ENCODE measurements at regions of chr3 and their contacts with region 1.

Region 1: GRCh38 chr3:90091204-90091924 is 983.9 kb downstream of the EPHA3 start:
- DNase-seq: peak; percentile 34
- ATAC-seq: peak; percentile 95
- H3K4me3 ChIP-seq: no peak overlapping the region
- H3K27ac ChIP-seq: no peak overlapping the region
- H3K4me1 ChIP-seq: no peaks in the 10 kb centered on the region
- H3K27me3 ChIP-seq: no peaks in the 10 kb centered on the region
- CTCF ChIP-seq: peak; percentile 47
- POLR2A ChIP-seq: no peak
- RAD21 ChIP-seq: peak; percentile 64

Region 2: DNA sequence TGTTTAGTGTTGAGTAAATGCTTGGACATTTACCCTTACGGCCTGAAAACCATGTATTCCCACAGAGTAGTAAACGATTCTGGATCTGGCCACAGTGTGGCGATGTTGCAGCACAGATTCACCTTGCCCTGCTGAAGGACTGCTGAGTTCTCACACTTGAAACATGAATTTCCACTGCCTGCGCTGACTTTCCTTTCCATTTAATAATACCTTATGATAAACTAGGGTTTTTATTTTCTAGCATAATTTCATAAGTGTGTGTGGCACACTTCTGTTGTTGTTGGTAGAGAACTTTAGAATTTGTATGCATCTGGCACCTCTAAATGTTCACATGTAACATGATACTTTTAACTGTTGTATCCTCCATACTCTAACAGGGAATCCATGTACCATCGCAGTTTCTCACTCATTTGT is 1887.7 kb before region 1 on chr3:
- CTCF ChIA-PET with region 1: no interaction called
- POLR2A ChIA-PET with region 1: no interaction called
- dilution Hi-C with region 1: no loop called
- in situ Hi-C with region 1: loop called (anchors 10 kb)
- intact Hi-C with region 1: loop called (anchors 1 kb)
- DNase-seq: peak; percentile 67
- ATAC-seq: peak; percentile 100
- H3K4me3 ChIP-seq: no peak overlapping the region
- H3K27ac ChIP-seq: no peak overlapping the region
- H3K4me1 ChIP-seq: no peaks in the 10 kb centered on the region
- H3K27me3 ChIP-seq: 0 out of 2 replicates have a peak, but pooled peaks cover 1% of the 10 kb centered on the region
- CTCF ChIP-seq: peak; percentile 83
- POLR2A ChIP-seq: no peak
- RAD21 ChIP-seq: peak; percentile 87

Region 3: DNA sequence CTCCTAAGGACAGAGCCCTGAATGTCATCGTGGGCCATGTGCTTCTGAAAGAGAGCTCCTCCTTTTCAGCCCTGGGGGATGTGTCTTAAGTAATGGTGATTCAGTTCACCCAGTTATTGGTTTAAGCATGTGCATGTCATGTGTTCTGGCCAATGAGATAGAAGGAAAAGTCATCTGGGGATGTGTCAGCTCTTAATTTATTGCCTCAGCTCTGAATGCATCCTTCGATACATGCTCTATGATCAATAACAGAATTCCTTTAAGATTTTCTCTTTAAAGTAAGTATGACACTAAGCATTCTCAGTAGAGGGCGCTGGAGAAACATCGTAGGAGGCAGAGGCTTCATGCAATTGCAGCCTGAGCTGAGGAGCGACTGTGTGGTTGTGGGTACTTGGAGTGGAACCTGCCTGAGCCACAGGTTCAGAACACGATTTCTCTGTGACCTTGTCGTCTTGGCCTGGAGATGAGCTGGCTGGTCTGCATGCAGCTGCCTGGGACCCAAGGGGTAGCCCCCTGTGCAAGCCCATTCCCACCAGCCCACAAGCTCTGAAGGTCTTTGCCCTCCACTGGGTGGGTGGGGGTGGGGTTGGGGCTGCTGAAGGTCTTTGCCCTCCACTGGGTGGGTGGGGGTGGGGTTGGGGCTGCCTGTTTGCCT is 1872.1 kb before region 1 on chr3:
- CTCF ChIA-PET with region 1: interaction called, 5 read pairs
- POLR2A ChIA-PET with region 1: no interaction called
- dilution Hi-C with region 1: no loop called
- in situ Hi-C with region 1: no loop called
- intact Hi-C with region 1: loop called (anchors 5 kb)
- DNase-seq: peak; percentile 49
- ATAC-seq: peak; percentile 87
- H3K4me3 ChIP-seq: no peak overlapping the region
- H3K27ac ChIP-seq: no peak overlapping the region
- H3K4me1 ChIP-seq: no peaks in the 10 kb centered on the region
- H3K27me3 ChIP-seq: no peaks in the 10 kb centered on the region
- CTCF ChIP-seq: peak; percentile 65
- POLR2A ChIP-seq: no peak
- RAD21 ChIP-seq: peak; percentile 70

Region 4: GRCh38 chr3:89107461-89108290 is 983.7 kb before region 1 on chr3 and contains the start of gene EPHA3:
- CTCF ChIA-PET with region 1: no interaction called
- POLR2A ChIA-PET with region 1: no interaction called
- dilution Hi-C with region 1: no loop called
- in situ Hi-C with region 1: no loop called
- intact Hi-C with region 1: loop called (anchors 5 kb)
- DNase-seq: peak; percentile 58
- ATAC-seq: peak; percentile 99
- H3K4me3 ChIP-seq: peak within 1 kb of the TSS; percentile 54
- H3K27ac ChIP-seq: no peak within 1 kb of the TSS
- H3K4me1 ChIP-seq: no peaks in the 10 kb centered on the region
- H3K27me3 ChIP-seq: peaks cover 11% of the 10 kb centered on the region
- CTCF ChIP-seq: no peak
- POLR2A ChIP-seq: no peak
- RAD21 ChIP-seq: no peak
- total RNA-seq, gene EPHA3: 0.18 and 0.28 TPM in 2 replicates

Region 5: GRCh38 chr3:89289574-89290190 is 801.7 kb before region 1 on chr3:
- CTCF ChIA-PET with region 1: no interaction called
- POLR2A ChIA-PET with region 1: no interaction called
- dilution Hi-C with region 1: no loop called
- in situ Hi-C with region 1: no loop called
- intact Hi-C with region 1: loop called (anchors 10 kb)
- DNase-seq: no peak
- ATAC-seq: no peak
- H3K4me3 ChIP-seq: no peak overlapping the region
- H3K27ac ChIP-seq: no peak overlapping the region
- H3K4me1 ChIP-seq: no peaks in the 10 kb centered on the region
- H3K27me3 ChIP-seq: no peaks in the 10 kb centered on the region
- CTCF ChIP-seq: no peak
- POLR2A ChIP-seq: no peak
- RAD21 ChIP-seq: no peak

Region 6: DNA sequence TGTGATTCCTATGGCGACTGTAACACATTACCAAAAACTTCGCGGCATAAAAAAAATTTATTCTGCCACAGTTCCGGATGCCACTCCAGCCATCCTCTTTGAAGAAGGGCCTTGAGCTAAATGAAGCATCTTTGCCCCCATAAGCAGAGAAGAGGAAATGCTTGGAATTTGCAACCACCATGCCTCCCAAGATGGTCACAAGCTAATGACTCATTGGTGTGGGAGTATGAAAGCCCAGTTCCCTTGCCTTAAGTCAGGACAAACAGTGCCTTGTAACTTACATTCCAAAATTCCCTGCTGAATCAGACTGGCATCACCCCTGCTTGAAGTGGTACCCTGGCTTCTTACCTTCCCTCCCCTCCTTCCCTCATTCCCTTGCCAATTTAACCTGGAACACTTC is 93.5 kb after region 1 on chr3:
- CTCF ChIA-PET with region 1: no interaction called
- POLR2A ChIA-PET with region 1: no interaction called
- dilution Hi-C with region 1: no loop called
- in situ Hi-C with region 1: loop called (anchors 25 kb)
- intact Hi-C with region 1: no loop called
- DNase-seq: peak; percentile 8
- ATAC-seq: 0 out of 2 replicates have a peak, but pooled peaks have one; percentile 21
- H3K4me3 ChIP-seq: no peak overlapping the region
- H3K27ac ChIP-seq: no peak overlapping the region
- H3K4me1 ChIP-seq: no peaks in the 10 kb centered on the region
- H3K27me3 ChIP-seq: no peaks in the 10 kb centered on the region
- CTCF ChIP-seq: no peak
- POLR2A ChIP-seq: no peak
- RAD21 ChIP-seq: no peak

Measured in IMR-90 (cell line).